ENCODE measurements at regions of chr4 and their contacts with region 1.

Region 1: GRCh38 chr4:64330143-64330542 is 79.1 kb downstream of the TECRL start:
- DNase-seq: no peak
- H3K4me3 ChIP-seq: no peak overlapping the region
- H3K27ac ChIP-seq: no peak overlapping the region
- H3K4me1 ChIP-seq: no peaks in the 10 kb centered on the region
- H3K27me3 ChIP-seq: no peaks in the 10 kb centered on the region
- CTCF ChIP-seq: no peak

Region 2: GRCh38 chr4:64489628-64490027 is 159.5 kb after region 1 on chr4:
- CTCF ChIA-PET with region 1: no interaction called
- POLR2A ChIA-PET with region 1: interaction called, 10 read pairs
- intact Hi-C with region 1: no loop called
- DNase-seq: no peak
- H3K4me3 ChIP-seq: no peak overlapping the region
- H3K27ac ChIP-seq: no peak overlapping the region
- H3K4me1 ChIP-seq: no peaks in the 10 kb centered on the region
- H3K27me3 ChIP-seq: no peaks in the 10 kb centered on the region
- CTCF ChIP-seq: no peak